GM12878 (cell line): ENCODE measurements at regions of chr15 and their contacts with region 1.

Region 1: GRCh38 chr15:84108728-84109127 is 126.8 kb upstream of the GOLGA6L4 start:
- DNase-seq: no peak
- ATAC-seq: no peak
- H3K4me3 ChIP-seq: no peak overlapping the region
- H3K27ac ChIP-seq: no peak overlapping the region
- H3K4me1 ChIP-seq: no peaks in the 10 kb centered on the region
- H3K27me3 ChIP-seq: no peaks in the 10 kb centered on the region
- CTCF ChIP-seq: no peak
- EP300 ChIP-seq: no peak
- POLR2A ChIP-seq: no peak
- RAD21 ChIP-seq: no peak

Region 2: DNA sequence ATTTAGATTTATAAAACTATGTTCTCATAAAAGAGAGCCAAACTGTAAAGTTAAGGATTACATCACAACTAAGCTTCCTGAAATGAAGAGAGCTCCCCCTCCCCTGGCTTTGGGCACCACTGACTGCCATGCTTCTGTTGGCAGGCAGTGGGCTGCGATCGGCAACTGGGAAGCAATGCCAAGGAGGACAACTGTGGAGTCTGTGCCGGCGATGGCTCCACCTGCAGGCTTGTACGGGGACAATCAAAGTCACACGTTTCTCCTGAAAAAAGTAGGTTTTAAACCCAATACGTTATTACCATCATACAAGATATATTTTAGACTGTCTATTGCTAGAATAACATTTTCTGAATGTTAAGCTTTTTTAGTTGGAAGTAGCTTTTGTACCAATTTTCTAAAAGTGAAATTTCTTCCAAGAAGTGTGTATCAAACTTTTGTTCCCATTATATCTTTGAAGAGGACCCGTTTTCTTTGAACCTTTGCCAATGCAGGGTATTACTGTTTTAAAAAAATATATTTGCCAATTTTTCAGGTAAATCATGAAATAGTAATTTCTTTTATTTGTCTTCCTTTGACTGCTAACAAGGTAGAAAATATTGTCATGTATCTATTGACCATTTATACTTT is 270.7 kb before region 1 on chr15:
- CTCF ChIA-PET with region 1: no interaction called
- POLR2A ChIA-PET with region 1: no interaction called
- RAD21 ChIA-PET with region 1: no interaction called
- SMC1A ChIA-PET with region 1: no interaction called
- in situ Hi-C with region 1: no loop called
- intact Hi-C with region 1: no loop called
- DNase-seq: no peak
- ATAC-seq: peak; percentile 74
- H3K4me3 ChIP-seq: no peak overlapping the region
- H3K27ac ChIP-seq: no peak overlapping the region
- H3K4me1 ChIP-seq: no peaks in the 10 kb centered on the region
- H3K27me3 ChIP-seq: no peaks in the 10 kb centered on the region
- CTCF ChIP-seq: peak; percentile 46 to 61 (median 53)
- EP300 ChIP-seq: no peak
- POLR2A ChIP-seq: no peak
- RAD21 ChIP-seq: no peak

Region 3: GRCh38 chr15:84552896-84553295 is 444.2 kb after region 1 on chr15:
- CTCF ChIA-PET with region 1: no interaction called
- POLR2A ChIA-PET with region 1: no interaction called
- RAD21 ChIA-PET with region 1: no interaction called
- SMC1A ChIA-PET with region 1: no interaction called
- in situ Hi-C with region 1: loop called (anchors 25 kb)
- intact Hi-C with region 1: no loop called
- DNase-seq: no peak
- ATAC-seq: no peak
- H3K4me3 ChIP-seq: no peak overlapping the region
- H3K27ac ChIP-seq: no peak overlapping the region
- H3K4me1 ChIP-seq: no peaks in the 10 kb centered on the region
- H3K27me3 ChIP-seq: no peaks in the 10 kb centered on the region
- CTCF ChIP-seq: no peak
- EP300 ChIP-seq: no peak
- POLR2A ChIP-seq: no peak
- RAD21 ChIP-seq: no peak